ENCODE measurements at regions of chr12 and their contacts with region 1.

Region 1: DNA sequence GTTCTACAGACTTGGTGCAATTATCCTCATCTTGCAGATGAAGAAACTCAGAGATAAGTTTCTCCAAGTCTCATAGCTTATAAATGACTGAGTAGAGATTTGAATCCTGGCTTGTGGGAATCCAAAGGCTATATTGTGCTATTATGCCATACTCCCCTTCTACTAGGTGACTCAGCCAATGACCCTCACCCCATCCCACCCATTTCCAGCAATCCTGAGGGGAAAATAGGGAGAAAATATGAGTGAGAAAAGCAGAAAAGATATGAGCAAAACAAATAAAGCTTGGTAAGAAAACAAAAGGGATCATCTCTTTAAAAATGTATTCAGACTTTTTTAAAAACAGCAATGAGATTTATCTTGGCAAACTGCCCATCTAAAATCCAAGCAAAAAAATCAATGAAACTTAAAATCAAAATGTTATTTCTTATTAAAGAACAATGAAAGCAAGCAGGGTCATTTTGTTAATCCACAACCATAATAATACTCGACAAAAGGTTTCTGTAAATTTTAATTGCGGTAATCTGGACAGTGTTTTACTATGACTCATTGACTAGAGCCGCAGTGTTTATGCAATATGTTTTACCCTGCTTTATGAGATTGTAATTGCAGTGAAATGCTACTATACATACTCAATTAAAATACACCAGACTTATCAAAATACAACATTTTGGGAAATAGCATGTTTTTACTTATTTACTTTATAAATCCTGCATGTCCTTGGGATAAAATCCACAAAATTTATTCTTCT is 13.1 kb upstream of the LGR5 start:
- DNase-seq: no peak
- ATAC-seq: no peak
- H3K4me3 ChIP-seq: no peak overlapping the region
- H3K27ac ChIP-seq: no peak overlapping the region
- H3K4me1 ChIP-seq: peaks cover 2% of the 10 kb centered on the region
- H3K27me3 ChIP-seq: no peaks in the 10 kb centered on the region
- CTCF ChIP-seq: no peak

Region 2: GRCh38 chr12:71392521-71393145 is 33.8 kb before region 1 on chr12:
- intact Hi-C with region 1: no loop called
- DNase-seq: no peak
- ATAC-seq: peak; percentile 79 to 99 (median 90)
- H3K4me3 ChIP-seq: no peak overlapping the region
- H3K27ac ChIP-seq: no peak overlapping the region
- H3K4me1 ChIP-seq: no peaks in the 10 kb centered on the region
- H3K27me3 ChIP-seq: no peaks in the 10 kb centered on the region
- CTCF ChIP-seq: peak; percentile 76

Region 3: DNA sequence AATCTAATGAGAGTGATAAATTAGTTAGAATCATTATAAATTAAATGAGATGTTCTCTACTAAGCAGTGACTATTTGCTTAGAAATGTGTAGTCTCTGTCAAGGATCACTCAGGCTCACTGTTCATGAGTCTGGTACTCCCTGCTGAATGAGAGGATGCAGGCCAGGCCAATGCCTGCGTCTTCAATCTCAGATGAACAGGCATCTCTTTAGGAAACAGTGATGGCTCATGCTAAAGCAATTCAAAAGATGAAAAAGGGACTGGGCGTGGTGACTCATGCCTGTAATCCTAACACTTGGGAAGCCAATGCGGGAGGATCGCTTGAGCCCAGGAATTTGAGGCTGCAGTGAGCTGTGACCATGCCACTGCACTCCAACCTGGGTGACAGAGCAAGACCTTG is 130.4 kb after region 1 on chr12:
- intact Hi-C with region 1: loop called in 1 of 2 experiments (anchors 5 kb)
- DNase-seq: no peak
- ATAC-seq: peak; percentile 68 to 83 (median 78)
- H3K4me3 ChIP-seq: no peak overlapping the region
- H3K27ac ChIP-seq: no peak overlapping the region
- H3K4me1 ChIP-seq: no peaks in the 10 kb centered on the region
- H3K27me3 ChIP-seq: no peaks in the 10 kb centered on the region
- CTCF ChIP-seq: no peak

Region 4: DNA sequence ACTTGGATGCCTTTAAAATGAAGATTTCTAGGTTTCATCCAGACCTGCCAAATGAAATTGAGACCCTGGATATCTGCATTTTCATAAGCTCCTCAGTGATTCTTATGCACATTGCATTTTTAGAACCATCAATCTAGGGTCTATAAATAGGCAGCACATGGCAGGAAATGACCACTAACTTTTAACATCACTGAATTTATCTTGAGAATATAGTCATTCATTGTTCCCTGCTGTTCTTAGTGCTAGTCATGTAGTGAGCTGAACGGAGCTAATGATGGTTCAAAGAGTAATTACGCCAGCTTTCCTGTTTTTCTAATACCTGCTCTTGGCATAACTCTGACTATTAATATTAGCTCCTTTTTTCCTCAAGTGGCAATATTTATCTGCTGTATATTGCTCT is 603.8 kb after region 1 on chr12:
- intact Hi-C with region 1: no loop called
- DNase-seq: no peak
- ATAC-seq: no peak
- H3K4me3 ChIP-seq: no peak overlapping the region
- H3K27ac ChIP-seq: no peak overlapping the region
- H3K4me1 ChIP-seq: no peaks in the 10 kb centered on the region
- H3K27me3 ChIP-seq: peaks cover 0 to 1% (median 0%) of the 10 kb centered on the region in 3 donors
- CTCF ChIP-seq: no peak

Measured in psoas muscle (tissue), 8 donors.